ENCODE measurements at regions of chr17 and their contacts with region 1.

Region 1: DNA sequence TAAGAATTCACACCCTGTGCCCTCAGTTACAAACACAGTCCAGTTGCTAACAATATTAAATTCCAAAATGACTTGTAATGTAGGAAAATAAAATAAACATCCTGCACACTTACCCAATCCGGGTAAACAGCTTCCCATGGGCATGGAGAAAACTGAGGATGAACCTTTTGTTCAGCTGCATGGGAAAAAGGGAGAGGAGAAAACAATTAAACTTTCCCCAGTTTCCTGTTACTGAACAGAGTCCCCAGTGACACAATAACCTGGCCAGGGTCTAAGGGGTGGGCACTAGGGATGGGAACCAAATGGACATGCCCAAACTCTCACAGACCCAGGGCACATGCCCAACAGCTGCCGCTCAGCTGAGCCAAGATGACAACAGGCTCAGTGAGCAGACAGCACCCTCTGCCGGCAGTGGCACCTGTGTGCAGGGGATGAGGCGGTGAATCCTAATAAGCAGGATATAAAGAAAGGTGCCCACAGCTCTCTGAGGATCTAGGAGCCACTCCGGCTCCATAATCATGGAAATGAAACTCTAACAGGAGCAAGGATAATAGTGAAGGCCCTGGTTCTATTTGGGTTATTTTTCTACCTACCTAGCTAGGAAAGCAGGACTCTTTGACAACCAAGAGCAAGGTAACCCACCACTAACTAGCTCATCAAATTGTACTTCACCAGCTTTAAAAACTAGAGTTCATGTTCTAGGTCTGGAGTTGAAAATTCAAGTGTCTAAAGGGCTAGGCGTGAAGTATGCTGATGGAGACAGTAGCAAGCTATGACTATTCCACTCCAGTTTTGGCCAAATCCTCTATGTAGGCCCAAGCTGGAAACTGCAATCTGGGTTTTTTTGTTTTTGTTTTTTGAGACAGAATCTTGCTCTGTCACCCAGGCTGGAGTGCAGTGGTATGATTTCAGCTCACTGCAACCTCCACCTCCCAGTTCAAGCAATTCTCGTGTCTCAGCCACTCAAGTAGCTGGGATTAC is 58.8 kb downstream of the SMG6 start:
- DNase-seq: peak; percentile 70 to 88 (median 73)
- H3K4me3 ChIP-seq: no peak overlapping the region
- H3K4me3 Mint-ChIP-seq: no peak overlapping the region
- H3K27ac ChIP-seq: no peak overlapping the region
- H3K27ac Mint-ChIP-seq: peak overlapping the region; percentile 21 to 90 (median 82)
- H3K4me1 ChIP-seq: no peaks in the 10 kb centered on the region
- H3K4me1 Mint-ChIP-seq: peaks cover 19 to 45% (median 34%) of the 10 kb centered on the region in 3 donors
- H3K27me3 ChIP-seq: no peaks in the 10 kb centered on the region
- H3K27me3 Mint-ChIP-seq: no peaks in the 10 kb centered on the region

Region 2: GRCh38 chr17:2070241-2071023 is 174.4 kb before region 1 on chr17:
- CTCF ChIA-PET with region 1: interaction called, 23 read pairs
- POLR2A ChIA-PET with region 1: no interaction called
- DNase-seq: peak in 1 of 5 donors; percentile 76
- H3K4me3 ChIP-seq: no peak overlapping the region
- H3K4me3 Mint-ChIP-seq: peak overlapping the region in 5 of 7 donors; percentile 44 to 69 (median 55)
- H3K27ac ChIP-seq: no peak overlapping the region
- H3K27ac Mint-ChIP-seq: peak overlapping the region; percentile 65 to 91 (median 84)
- H3K4me1 ChIP-seq: peaks cover 29% of the 10 kb centered on the region
- H3K4me1 Mint-ChIP-seq: peaks cover 33 to 67% (median 46%) of the 10 kb centered on the region in 3 donors
- H3K27me3 ChIP-seq: no peaks in the 10 kb centered on the region
- H3K27me3 Mint-ChIP-seq: no peaks in the 10 kb centered on the region

Region 3: GRCh38 chr17:2207815-2208515 is 36.9 kb before region 1 on chr17:
- CTCF ChIA-PET with region 1: interaction called, 11 read pairs
- POLR2A ChIA-PET with region 1: interaction called, 3 read pairs
- DNase-seq: no peak
- H3K4me3 ChIP-seq: no peak overlapping the region
- H3K4me3 Mint-ChIP-seq: no peak overlapping the region
- H3K27ac ChIP-seq: no peak overlapping the region
- H3K27ac Mint-ChIP-seq: peak overlapping the region in 2 of 8 donors; percentile 50 to 66
- H3K4me1 ChIP-seq: peaks cover 36% of the 10 kb centered on the region
- H3K4me1 Mint-ChIP-seq: peaks cover 21 to 41% (median 27%) of the 10 kb centered on the region in 3 donors
- H3K27me3 ChIP-seq: no peaks in the 10 kb centered on the region
- H3K27me3 Mint-ChIP-seq: no peaks in the 10 kb centered on the region

Region 4: GRCh38 chr17:2222901-2223616 is 21.8 kb before region 1 on chr17:
- CTCF ChIA-PET with region 1: interaction called, 27 read pairs
- POLR2A ChIA-PET with region 1: no interaction called
- DNase-seq: peak; percentile 11 to 85 (median 71)
- H3K4me3 ChIP-seq: no peak overlapping the region
- H3K4me3 Mint-ChIP-seq: peak overlapping the region; percentile 29 to 85 (median 69)
- H3K27ac ChIP-seq: peak overlapping the region; percentile 22
- H3K27ac Mint-ChIP-seq: peak overlapping the region; percentile 83 to 95 (median 89)
- H3K4me1 ChIP-seq: peaks cover 20% of the 10 kb centered on the region
- H3K4me1 Mint-ChIP-seq: peaks cover 32 to 53% (median 51%) of the 10 kb centered on the region in 3 donors
- H3K27me3 ChIP-seq: no peaks in the 10 kb centered on the region
- H3K27me3 Mint-ChIP-seq: no peaks in the 10 kb centered on the region

Region 5: DNA sequence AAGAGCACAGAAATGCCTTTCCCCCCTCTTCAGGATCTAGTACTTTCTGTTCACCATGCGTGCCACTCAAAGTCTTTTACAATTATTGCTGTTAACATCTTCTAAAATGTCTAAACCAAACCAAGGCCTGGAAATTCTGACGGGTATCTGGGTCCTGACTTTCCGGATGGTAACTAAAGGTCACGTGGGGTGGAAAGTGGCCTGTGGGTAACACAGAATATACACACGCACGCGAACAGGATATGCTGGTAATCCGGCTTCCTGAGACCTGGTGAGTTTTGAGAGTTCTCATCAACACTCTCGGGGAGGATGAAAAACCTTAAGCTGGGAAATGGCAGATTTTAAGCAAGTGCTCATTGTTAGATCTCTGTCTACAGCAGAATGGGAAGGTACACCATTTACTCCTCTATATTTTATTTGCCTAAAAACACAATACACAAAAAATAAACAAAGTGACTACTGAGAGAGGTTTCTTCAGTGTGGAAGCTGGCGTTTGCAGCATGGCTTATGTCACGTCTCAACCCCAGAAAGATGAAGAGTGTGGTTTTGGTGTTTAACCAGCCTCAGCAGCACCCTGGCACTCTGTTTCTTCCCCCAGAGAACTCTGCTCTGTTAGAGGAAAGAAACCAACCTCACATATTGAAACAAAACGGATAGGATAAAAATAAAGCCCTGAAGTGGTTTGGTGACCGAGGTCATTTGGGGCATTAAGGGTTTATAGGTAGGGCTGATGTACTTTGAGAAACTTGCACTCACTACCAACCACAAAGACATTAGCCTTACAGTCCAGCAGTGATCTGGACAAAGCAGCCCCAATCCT is 21.4 kb after region 1 on chr17:
- CTCF ChIA-PET with region 1: interaction called, 72 read pairs
- POLR2A ChIA-PET with region 1: interaction called, 6 read pairs
- DNase-seq: peak; percentile 76 to 94 (median 92)
- H3K4me3 ChIP-seq: peak overlapping the region; percentile 52
- H3K4me3 Mint-ChIP-seq: peak overlapping the region; percentile 61 to 92 (median 85)
- H3K27ac ChIP-seq: peak overlapping the region; percentile 64
- H3K27ac Mint-ChIP-seq: peak overlapping the region; percentile 96 to 100 (median 98)
- H3K4me1 ChIP-seq: peaks cover 77% of the 10 kb centered on the region
- H3K4me1 Mint-ChIP-seq: peaks cover 71 to 87% (median 84%) of the 10 kb centered on the region in 3 donors
- H3K27me3 ChIP-seq: no peaks in the 10 kb centered on the region
- H3K27me3 Mint-ChIP-seq: peaks cover 0 to 2% of the 10 kb centered on the region in 2 donors